MCF 10A (cell line): ENCODE measurements at regions of chr20 and their contacts with region 1.

Region 1: DNA sequence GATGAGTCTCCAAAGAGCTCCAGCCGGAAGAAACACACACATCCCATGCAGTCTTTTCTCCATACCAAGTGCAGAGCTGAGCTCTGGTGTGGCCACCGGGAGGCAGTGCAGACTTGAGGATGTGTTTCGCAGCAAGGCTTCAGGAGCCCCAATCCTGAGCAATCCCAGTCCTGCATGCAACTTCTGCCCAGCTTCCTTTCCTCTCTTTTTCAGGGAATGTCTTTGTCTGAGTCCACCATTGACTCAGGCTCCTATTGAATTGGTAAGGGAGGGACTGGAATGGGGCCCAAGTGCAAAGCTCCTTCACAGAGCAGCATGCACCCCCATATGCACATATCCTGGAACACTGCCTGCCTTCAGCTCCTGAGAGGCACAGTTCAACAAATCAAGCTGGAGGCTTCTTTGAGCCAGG is 50.5 kb upstream of the ASIP start:
- DNase-seq: peak; percentile 79
- H3K4me3 Mint-ChIP-seq: no peak overlapping the region
- H3K27ac Mint-ChIP-seq: no peak overlapping the region
- H3K4me1 Mint-ChIP-seq: no peaks in the 10 kb centered on the region
- H3K27me3 Mint-ChIP-seq: peaks cover 38% of the 10 kb centered on the region
- CTCF ChIP-seq: peak; percentile 85

Region 2: GRCh38 chr20:33992923-33993575 is 197.6 kb before region 1 on chr20:
- CTCF ChIA-PET with region 1: no interaction called
- POLR2A ChIA-PET with region 1: no interaction called
- intact Hi-C with region 1: no loop called
- DNase-seq: peak; percentile 98
- H3K4me3 Mint-ChIP-seq: peak overlapping the region; percentile 95
- H3K27ac Mint-ChIP-seq: peak overlapping the region; percentile 96
- H3K4me1 Mint-ChIP-seq: peaks cover 16% of the 10 kb centered on the region
- H3K27me3 Mint-ChIP-seq: no peaks in the 10 kb centered on the region
- CTCF ChIP-seq: no peak

Region 3: GRCh38 chr20:34180460-34181120 is 10.1 kb before region 1 on chr20:
- CTCF ChIA-PET with region 1: interaction called, 35 read pairs
- POLR2A ChIA-PET with region 1: interaction called, 3 read pairs
- intact Hi-C with region 1: no loop called
- DNase-seq: peak; percentile 31
- H3K4me3 Mint-ChIP-seq: no peak overlapping the region
- H3K27ac Mint-ChIP-seq: no peak overlapping the region
- H3K4me1 Mint-ChIP-seq: peaks cover 12% of the 10 kb centered on the region
- H3K27me3 Mint-ChIP-seq: peaks cover 22% of the 10 kb centered on the region
- CTCF ChIP-seq: no peak

Region 4: GRCh38 chr20:34254979-34255378 is 64.3 kb after region 1 on chr20:
- CTCF ChIA-PET with region 1: interaction called, 16 read pairs
- POLR2A ChIA-PET with region 1: no interaction called
- intact Hi-C with region 1: loop called (anchors 2 kb)
- DNase-seq: no peak
- H3K4me3 Mint-ChIP-seq: no peak overlapping the region
- H3K27ac Mint-ChIP-seq: no peak overlapping the region
- H3K4me1 Mint-ChIP-seq: no peaks in the 10 kb centered on the region
- H3K27me3 Mint-ChIP-seq: no peaks in the 10 kb centered on the region
- CTCF ChIP-seq: no peak

Region 5: DNA sequence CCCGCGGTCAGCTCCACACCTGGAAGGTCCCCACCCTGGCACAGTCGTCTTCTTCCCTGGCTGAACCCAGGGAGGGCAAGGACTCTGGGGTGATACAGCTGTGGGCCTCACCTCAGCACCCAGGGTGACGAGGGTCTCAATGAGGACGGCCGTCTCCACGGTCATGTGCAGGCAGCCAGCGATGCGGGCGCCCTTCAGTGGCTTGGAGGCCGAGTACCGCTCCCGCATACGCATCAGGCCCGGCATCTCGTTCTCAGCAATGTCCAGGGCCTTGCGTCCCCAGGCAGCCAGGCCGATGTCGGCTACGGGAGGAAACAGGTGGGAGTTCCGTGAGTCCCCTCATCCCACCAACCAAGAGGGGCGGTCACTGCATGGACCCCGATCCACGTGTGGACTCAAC is 104.6 kb after region 1 on chr20:
- CTCF ChIA-PET with region 1: interaction called, 11 read pairs
- POLR2A ChIA-PET with region 1: interaction called, 3 read pairs
- intact Hi-C with region 1: no loop called
- DNase-seq: no peak
- H3K4me3 Mint-ChIP-seq: no peak overlapping the region
- H3K27ac Mint-ChIP-seq: no peak overlapping the region
- H3K4me1 Mint-ChIP-seq: peaks cover 5% of the 10 kb centered on the region
- H3K27me3 Mint-ChIP-seq: no peaks in the 10 kb centered on the region
- CTCF ChIP-seq: no peak

Region 6: GRCh38 chr20:34458631-34459030 is 267.9 kb after region 1 on chr20:
- CTCF ChIA-PET with region 1: no interaction called
- POLR2A ChIA-PET with region 1: no interaction called
- intact Hi-C with region 1: no loop called
- DNase-seq: no peak
- H3K4me3 Mint-ChIP-seq: no peak overlapping the region
- H3K27ac Mint-ChIP-seq: no peak overlapping the region
- H3K4me1 Mint-ChIP-seq: no peaks in the 10 kb centered on the region
- H3K27me3 Mint-ChIP-seq: no peaks in the 10 kb centered on the region
- CTCF ChIP-seq: no peak

Region 7: GRCh38 chr20:34522969-34523871 is 332.5 kb after region 1 on chr20:
- CTCF ChIA-PET with region 1: interaction called, 5 read pairs
- POLR2A ChIA-PET with region 1: no interaction called
- intact Hi-C with region 1: loop called (anchors 10 kb)
- DNase-seq: peak; percentile 40
- H3K4me3 Mint-ChIP-seq: no peak overlapping the region
- H3K27ac Mint-ChIP-seq: peak overlapping the region; percentile 97
- H3K4me1 Mint-ChIP-seq: peaks cover 33% of the 10 kb centered on the region
- H3K27me3 Mint-ChIP-seq: no peaks in the 10 kb centered on the region
- CTCF ChIP-seq: peak; percentile 31